ENCODE measurements at regions of chr12 and their contacts with region 1.

Region 1: DNA sequence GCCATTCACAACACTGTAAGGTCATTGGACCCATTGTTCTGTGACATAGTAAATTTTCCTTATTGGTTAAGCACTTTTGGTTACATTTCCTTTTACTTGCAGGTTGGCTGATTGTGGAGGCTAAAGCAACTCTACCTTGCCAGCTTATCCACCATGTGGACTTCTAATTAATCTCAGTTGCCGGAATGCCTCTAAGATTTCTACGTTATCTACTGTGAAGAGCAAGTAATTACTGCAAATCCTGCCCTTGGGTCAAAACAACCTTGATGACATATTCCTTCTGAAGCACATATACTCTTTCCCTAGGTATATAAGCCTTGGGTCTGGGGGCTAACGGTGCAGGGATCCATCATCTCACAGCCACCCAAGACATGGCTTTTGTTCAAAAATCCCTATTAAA is 19.5 kb upstream of the MORN3 start:
- DNase-seq: no peak
- ATAC-seq: no peak
- H3K4me3 Mint-ChIP-seq: no peak overlapping the region
- H3K27ac Mint-ChIP-seq: no peak overlapping the region
- H3K4me1 Mint-ChIP-seq: peaks cover 7% of the 10 kb centered on the region
- H3K27me3 Mint-ChIP-seq: no peaks in the 10 kb centered on the region

Region 2: GRCh38 chr12:121351820-121352681 is 336.9 kb before region 1 on chr12 and contains the start of gene ANAPC5:
- CTCF ChIA-PET with region 1: no interaction called
- POLR2A ChIA-PET with region 1: no interaction called
- intact Hi-C with region 1: loop called in 1 of 2 experiments (anchors 1 kb)
- DNase-seq: peak; percentile 94
- ATAC-seq: peak; percentile 99
- H3K4me3 Mint-ChIP-seq: peak within 1 kb of the TSS; percentile 92
- H3K27ac Mint-ChIP-seq: peak within 1 kb of the TSS; percentile 97
- H3K4me1 Mint-ChIP-seq: peaks cover 24% of the 10 kb centered on the region
- H3K27me3 Mint-ChIP-seq: peaks cover under 1% of the 10 kb centered on the region
- total RNA-seq, gene ANAPC5: 113 to 118 TPM

Region 3: DNA sequence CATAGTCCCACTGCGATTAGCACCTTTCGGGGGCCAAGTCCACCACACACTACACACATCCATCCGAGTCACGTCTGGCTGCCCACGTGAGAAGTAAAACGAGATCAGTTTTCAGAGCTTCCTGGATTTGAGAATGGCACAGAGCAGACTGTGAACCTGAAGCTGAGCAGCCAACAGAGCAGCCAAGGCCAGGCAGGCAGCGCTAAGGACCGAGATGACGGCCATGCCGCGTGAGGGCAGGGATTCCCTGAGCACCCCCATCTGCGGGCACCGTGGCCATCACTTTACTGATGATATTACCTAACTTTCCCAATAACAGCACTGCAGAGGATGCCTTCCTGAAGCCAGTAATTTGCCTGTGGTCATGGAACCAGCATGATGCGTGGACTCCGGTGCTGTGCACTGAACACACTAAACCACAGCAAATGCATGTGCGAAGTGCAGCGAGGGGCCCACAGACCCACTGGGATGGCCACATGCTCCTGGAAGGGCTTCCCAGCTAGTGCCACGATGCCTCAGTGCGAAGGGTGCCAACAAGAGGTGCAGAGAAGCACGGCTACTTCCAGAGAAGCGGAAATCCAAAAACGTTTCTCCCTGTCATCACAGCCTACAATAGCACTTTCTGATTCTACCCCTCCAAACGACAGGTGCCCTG is 233.1 kb before region 1 on chr12:
- CTCF ChIA-PET with region 1: no interaction called
- POLR2A ChIA-PET with region 1: no interaction called
- intact Hi-C with region 1: no loop called
- DNase-seq: no peak
- ATAC-seq: no peak
- H3K4me3 Mint-ChIP-seq: no peak overlapping the region
- H3K27ac Mint-ChIP-seq: no peak overlapping the region
- H3K4me1 Mint-ChIP-seq: peaks cover 48% of the 10 kb centered on the region
- H3K27me3 Mint-ChIP-seq: no peaks in the 10 kb centered on the region

Region 4: DNA sequence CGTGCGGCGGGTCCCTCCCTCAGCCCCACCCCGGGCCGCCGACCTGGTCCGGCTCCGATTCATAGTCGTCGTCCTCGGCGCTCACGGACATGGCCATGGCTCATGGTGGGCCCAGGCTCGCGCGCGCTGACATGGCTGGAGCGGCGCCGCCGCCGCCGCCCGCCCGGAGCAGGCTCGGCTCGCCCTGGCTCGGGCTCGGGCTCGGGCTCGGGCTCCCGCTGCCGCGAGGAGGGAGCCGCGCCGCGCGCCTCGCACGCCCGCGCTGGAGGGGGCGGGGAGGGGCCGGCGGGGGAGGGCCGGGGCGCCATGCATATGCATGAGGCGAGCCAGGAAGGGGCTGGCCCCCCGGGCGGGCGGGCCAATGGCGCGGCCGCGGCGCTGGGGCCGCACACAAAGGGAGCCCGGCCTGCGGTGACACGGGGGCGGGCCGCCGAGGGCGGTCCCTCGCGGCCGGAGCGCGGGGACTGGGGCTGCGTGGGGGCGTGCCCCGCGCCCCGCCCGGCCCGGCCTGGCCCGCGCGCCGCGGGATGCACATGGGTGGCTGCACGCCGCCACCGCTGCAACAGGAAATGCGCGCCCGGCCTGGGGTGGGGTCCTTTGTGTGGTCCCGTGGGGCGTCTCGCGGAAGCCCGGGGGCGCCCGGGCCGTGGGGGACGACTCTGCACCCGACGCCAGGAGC is 221.7 kb before region 1 on chr12:
- CTCF ChIA-PET with region 1: no interaction called
- POLR2A ChIA-PET with region 1: interaction called, 3 read pairs
- intact Hi-C with region 1: loop called in 1 of 2 experiments (anchors 1 kb)
- DNase-seq: peak; percentile 93
- ATAC-seq: peak; percentile 94
- H3K4me3 Mint-ChIP-seq: peak overlapping the region; percentile 57
- H3K27ac Mint-ChIP-seq: no peak overlapping the region
- H3K4me1 Mint-ChIP-seq: peaks cover 20% of the 10 kb centered on the region
- H3K27me3 Mint-ChIP-seq: no peaks in the 10 kb centered on the region

Region 5: GRCh38 chr12:121590476-121591143 is 98.4 kb before region 1 on chr12:
- CTCF ChIA-PET with region 1: no interaction called
- POLR2A ChIA-PET with region 1: no interaction called
- intact Hi-C with region 1: loop called (anchors 1 kb)
- DNase-seq: peak; percentile 79
- ATAC-seq: peak; percentile 82
- H3K4me3 Mint-ChIP-seq: peak overlapping the region; percentile 75
- H3K27ac Mint-ChIP-seq: peak overlapping the region; percentile 98
- H3K4me1 Mint-ChIP-seq: peaks cover 32% of the 10 kb centered on the region
- H3K27me3 Mint-ChIP-seq: no peaks in the 10 kb centered on the region

Region 6: DNA sequence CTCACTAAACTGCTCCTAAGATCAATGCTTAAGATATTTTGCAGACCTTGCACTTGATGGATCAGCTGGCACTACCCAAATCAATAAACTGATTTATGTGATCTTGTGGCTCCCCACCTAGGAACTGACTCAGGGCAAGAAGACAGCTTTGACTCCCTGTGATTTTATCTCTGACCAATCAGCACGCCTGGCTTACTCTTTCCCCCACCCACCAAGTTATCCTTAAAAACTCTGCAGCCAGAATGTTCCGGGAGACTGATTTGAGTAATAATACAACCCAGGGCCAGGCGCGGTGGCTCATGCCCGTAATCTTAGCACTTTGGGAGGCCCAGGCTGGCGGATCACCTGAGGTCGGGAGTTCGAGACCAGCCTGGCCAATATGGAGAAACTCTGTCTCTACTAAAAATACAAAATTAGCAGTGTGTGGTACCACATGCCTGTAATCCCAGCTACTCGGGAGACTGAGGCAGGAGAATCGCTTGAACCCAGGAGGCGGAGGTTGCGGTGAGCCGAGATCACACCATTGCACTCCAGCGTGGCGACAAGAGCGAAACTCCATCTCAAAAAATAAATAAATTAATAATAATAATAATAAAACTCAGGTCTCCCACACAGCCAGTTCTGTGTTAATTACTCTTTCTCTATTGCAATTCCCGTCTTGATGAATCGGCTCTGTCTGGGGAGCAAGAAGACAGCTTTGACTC is 31.5 kb before region 1 on chr12:
- CTCF ChIA-PET with region 1: no interaction called
- POLR2A ChIA-PET with region 1: no interaction called
- intact Hi-C with region 1: loop called in 1 of 2 experiments (anchors 1 kb)
- DNase-seq: peak; percentile 65
- ATAC-seq: peak; percentile 64
- H3K4me3 Mint-ChIP-seq: peak overlapping the region; percentile 1
- H3K27ac Mint-ChIP-seq: peak overlapping the region; percentile 99
- H3K4me1 Mint-ChIP-seq: peaks cover 65% of the 10 kb centered on the region
- H3K27me3 Mint-ChIP-seq: no peaks in the 10 kb centered on the region

Region 7: GRCh38 chr12:121839106-121839992 is 150.4 kb after region 1 on chr12:
- CTCF ChIA-PET with region 1: no interaction called
- POLR2A ChIA-PET with region 1: no interaction called
- intact Hi-C with region 1: loop called in 1 of 2 experiments (anchors 1 kb)
- DNase-seq: peak; percentile 100
- ATAC-seq: peak; percentile 94
- H3K4me3 Mint-ChIP-seq: peak overlapping the region; percentile 91
- H3K27ac Mint-ChIP-seq: peak overlapping the region; percentile 91
- H3K4me1 Mint-ChIP-seq: peaks cover 14% of the 10 kb centered on the region
- H3K27me3 Mint-ChIP-seq: no peaks in the 10 kb centered on the region